Activated CD4-positive, alpha-beta T cell treated with anti-CD3 and anti-CD28 coated beads, Interleukin-2, amount 10 ng/mL, durations not matched to agents 24 days and 14 days (primary cell): ENCODE measurements at regions of chr22 and their contacts with region 1.

Region 1: DNA sequence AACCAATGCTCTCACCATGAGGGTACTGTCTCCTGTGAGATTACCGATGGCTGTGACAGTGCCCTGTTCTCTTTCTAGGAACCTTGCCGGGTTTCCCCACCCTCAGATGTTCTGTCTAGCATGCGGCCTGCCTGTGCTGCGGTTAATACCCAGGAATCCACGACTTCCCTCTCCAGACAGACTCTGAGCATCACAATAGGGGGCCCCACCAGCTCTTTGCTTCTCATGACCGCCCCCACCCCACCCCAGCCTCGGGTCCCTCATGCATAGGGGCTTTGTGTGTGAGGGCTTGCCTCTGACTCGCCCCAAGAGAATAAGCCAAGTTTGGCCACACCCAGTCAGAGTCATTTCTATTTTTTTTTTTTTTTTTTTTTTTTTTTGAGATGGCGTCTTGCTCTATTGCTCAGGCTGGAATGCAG is 10.3 kb downstream of the PARVG start:
- DNase-seq: peak; percentile 79
- H3K4me3 Mint-ChIP-seq: no peak overlapping the region
- H3K27ac Mint-ChIP-seq: peak overlapping the region; percentile 65
- H3K4me1 Mint-ChIP-seq: peaks cover 30% of the 10 kb centered on the region
- H3K27me3 Mint-ChIP-seq: no peaks in the 10 kb centered on the region

Region 2: GRCh38 chr22:43957871-43958270 is 233.2 kb before region 1 on chr22:
- intact Hi-C with region 1: no loop called
- DNase-seq: no peak
- H3K4me3 Mint-ChIP-seq: peak overlapping the region; percentile 8
- H3K27ac Mint-ChIP-seq: no peak overlapping the region
- H3K4me1 Mint-ChIP-seq: peaks cover 23% of the 10 kb centered on the region
- H3K27me3 Mint-ChIP-seq: no peaks in the 10 kb centered on the region

Region 3: DNA sequence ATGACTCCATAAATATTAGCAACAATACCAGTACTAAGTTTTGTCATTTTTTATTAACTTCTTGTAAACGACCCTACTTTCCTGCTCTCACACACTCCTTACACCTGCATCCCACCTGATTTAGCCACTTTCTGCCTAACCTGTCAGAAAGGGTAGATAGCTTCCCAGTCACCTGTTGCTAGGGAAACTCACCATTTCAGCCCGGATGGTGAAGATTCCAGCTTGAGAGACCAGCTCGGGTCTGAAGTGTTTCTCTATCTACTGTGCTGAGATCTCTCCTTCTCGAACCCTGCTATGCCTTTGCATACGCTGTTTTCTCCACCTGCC is 10.4 kb before region 1 on chr22 and contains the start of gene PARVG:
- intact Hi-C with region 1: loop called (anchors 1 kb)
- DNase-seq: peak; percentile 86
- H3K4me3 Mint-ChIP-seq: peak within 1 kb of the TSS; percentile 93
- H3K27ac Mint-ChIP-seq: peak within 1 kb of the TSS; percentile 96
- H3K4me1 Mint-ChIP-seq: peaks cover 22% of the 10 kb centered on the region
- H3K27me3 Mint-ChIP-seq: peaks cover 7% of the 10 kb centered on the region
- total RNA-seq, gene PARVG: 48.9 and 52.2 TPM in 2 replicates